ENCODE measurements at regions of chr13 and their contacts with region 1.

Region 1: GRCh38 chr13:46655377-46656180 is 102.6 kb downstream of the LRCH1 start:
- DNase-seq: no peak
- ATAC-seq: peak; percentile 50
- H3K4me3 Mint-ChIP-seq: no peak overlapping the region
- H3K27ac Mint-ChIP-seq: peak overlapping the region; percentile 42
- H3K4me1 Mint-ChIP-seq: peaks cover 36% of the 10 kb centered on the region
- H3K27me3 Mint-ChIP-seq: no peaks in the 10 kb centered on the region

Region 2: DNA sequence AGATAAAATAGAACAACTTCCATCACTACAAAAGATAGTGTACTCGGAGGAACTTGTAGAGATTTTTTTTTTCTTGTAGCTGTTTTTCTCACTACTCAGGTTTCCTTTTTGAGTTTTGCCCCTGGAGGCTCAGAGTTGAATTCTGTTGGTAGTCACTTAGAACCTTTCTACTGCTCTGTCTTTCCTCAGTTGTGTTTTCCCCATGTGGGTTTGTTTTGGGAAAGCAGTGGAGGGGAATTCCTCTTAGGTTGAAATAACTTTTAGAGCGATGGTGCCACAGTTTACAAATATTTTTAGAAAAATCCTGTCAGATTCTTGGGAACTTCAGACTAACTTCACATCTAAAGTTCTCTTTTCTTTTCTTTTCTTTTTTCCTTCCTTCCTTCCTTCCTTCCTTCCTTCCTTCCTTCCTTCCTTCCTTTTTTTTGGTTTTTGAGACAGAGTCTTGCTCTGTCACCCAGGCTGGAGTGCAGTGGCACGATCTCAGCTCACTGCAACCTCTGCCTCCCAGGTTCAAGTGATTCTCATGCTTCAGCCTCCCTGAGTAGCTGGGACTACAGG is 36.8 kb before region 1 on chr13:
- CTCF ChIA-PET with region 1: no interaction called
- POLR2A ChIA-PET with region 1: no interaction called
- intact Hi-C with region 1: loop called in 1 of 2 experiments (anchors 1 kb)
- DNase-seq: no peak
- ATAC-seq: no peak
- H3K4me3 Mint-ChIP-seq: no peak overlapping the region
- H3K27ac Mint-ChIP-seq: no peak overlapping the region
- H3K4me1 Mint-ChIP-seq: peaks cover 45% of the 10 kb centered on the region
- H3K27me3 Mint-ChIP-seq: no peaks in the 10 kb centered on the region

Measured in activated CD4-positive, alpha-beta T cell treated with anti-CD3 and anti-CD28 coated beads for 36 hours (primary cell).